ENCODE measurements at regions of chr1 and their contacts with region 1.

Region 1: DNA sequence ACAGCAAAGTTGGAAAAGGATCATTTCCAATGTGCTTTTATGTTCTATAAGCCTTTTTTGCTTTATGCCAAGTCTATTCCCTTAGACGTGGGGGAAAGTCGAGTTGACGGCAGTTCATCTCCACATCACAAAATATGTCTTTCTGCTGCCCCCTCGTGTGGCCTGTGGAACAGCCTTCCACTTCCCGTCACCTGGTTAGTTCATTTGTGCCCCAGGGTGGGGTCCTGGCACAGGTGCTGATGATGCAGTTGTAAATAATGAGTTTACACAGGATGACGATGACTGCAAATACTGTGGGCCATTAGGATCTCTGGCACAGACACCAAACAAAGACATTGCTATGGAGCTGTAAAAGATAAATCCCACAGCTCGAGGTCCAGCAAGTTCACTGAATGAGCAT is 10.0 kb upstream of the OTUD3 start:
- DNase-seq: peak in 2 of 4 experiments; percentile 18 to 33
- ATAC-seq: peak; percentile 39; the same call in 2 of the 3 replicates
- H3K4me3 ChIP-seq: no peak overlapping the region
- H3K27ac ChIP-seq: no peak overlapping the region
- H3K4me1 ChIP-seq: peaks cover 0 to 6% of the 10 kb centered on the region in 2 experiments; a peak in 1 of 5 replicates
- H3K27me3 ChIP-seq: peaks cover 15 to 17% of the 10 kb centered on the region in 2 experiments; a peak in 4 of 5 replicates
- CTCF ChIP-seq: peak; percentile 38 to 56 (median 53); a peak in 5 of 6 replicates
- EP300 ChIP-seq: no peak
- POLR2A ChIP-seq: no peak
- RAD21 ChIP-seq: peak; percentile 23 to 61; a peak in 2 of 4 replicates

Region 2: DNA sequence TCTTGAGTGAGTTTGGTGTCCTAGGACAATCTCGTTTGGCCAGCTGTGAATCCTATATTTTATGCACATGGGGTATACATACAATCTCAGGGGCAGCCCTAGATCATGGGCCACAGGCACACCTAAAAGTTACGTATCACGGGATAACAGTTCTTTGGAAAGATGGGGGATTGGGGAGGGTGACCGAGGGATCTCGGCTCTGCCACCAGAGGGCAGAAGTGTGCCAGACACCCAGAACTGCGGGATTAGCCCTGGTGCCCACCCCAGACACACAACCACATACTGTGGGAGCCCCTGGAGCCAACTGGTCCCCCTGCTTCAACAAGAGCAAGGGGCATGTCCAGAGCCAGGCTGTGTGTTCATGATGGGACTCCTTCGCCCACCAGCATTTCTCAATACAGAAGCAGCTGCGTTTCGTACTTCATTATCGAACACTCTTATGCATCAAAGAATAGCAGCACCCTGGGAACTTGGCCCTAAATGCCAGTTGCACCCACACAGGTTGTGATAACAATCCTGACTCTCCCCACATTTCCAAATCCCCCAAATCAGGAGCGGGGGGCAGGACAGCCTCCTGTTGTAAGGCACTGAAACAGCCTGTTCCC is 109.9 kb before region 1 on chr1:
- CTCF ChIA-PET with region 1: no interaction called
- POLR2A ChIA-PET with region 1: no interaction called
- in situ Hi-C with region 1: no loop called
- intact Hi-C with region 1: loop called (anchors 5 kb)
- DNase-seq: peak; percentile 50 to 87 (median 82)
- ATAC-seq: peak; percentile 92
- H3K4me3 ChIP-seq: no peak overlapping the region
- H3K27ac ChIP-seq: no peak overlapping the region
- H3K4me1 ChIP-seq: no peaks in the 10 kb centered on the region
- H3K27me3 ChIP-seq: peaks cover 37 to 85% of the 10 kb centered on the region in 2 experiments
- CTCF ChIP-seq: peak; percentile 75 to 87 (median 77)
- EP300 ChIP-seq: no peak
- POLR2A ChIP-seq: no peak
- RAD21 ChIP-seq: peak; percentile 41 to 77

Region 3: DNA sequence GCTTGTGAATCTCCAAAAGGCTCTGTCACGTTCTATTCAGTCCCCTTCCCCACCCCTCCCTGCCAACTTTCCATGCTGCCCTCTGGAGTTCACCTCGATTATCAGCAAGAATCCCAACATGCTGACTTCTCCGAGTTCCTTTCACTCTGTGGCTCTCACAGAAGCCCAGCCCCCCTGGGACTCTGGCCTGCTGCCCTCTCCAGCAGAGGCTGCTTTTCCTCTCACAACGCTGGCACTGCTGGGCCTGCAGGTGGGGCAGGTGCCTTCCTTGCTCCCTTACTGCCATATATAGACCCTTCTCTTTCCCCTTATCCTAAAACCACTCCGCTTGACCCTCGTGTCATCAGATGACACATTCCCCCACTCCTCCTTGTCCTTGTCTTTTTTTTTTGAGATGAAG is 46.9 kb before region 1 on chr1:
- CTCF ChIA-PET with region 1: no interaction called
- POLR2A ChIA-PET with region 1: no interaction called
- in situ Hi-C with region 1: no loop called
- intact Hi-C with region 1: no loop called
- DNase-seq: no peak
- ATAC-seq: no peak
- H3K4me3 ChIP-seq: no peak overlapping the region
- H3K27ac ChIP-seq: no peak overlapping the region
- H3K4me1 ChIP-seq: no peaks in the 10 kb centered on the region
- H3K27me3 ChIP-seq: peaks cover 13 to 28% of the 10 kb centered on the region in 2 experiments
- CTCF ChIP-seq: peak in 1 of 3 experiments; percentile 2; a peak in 1 of 6 replicates
- EP300 ChIP-seq: no peak
- POLR2A ChIP-seq: no peak
- RAD21 ChIP-seq: 0 out of 4 replicates have a peak, but pooled peaks of 1 of the 2 experiments have one; percentile 8

Region 4: DNA sequence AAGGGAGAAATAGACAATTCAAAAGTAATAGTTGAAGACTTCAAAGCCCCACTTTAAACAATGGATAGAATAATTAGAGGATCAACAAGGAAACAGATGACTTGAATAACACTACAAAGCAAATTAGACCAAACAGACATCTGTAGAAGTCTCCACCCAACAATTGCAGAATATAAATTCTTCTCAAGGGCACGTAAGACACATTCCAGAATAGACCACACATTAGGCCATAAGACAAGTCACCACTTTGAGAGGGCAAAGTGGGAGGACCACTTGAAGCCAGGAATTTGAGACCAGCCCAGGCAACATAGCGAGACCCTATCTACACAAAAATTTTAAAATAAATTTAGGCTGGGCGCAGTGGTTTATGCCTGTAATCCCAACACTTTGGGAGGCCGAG is 36.6 kb before region 1 on chr1:
- CTCF ChIA-PET with region 1: no interaction called
- POLR2A ChIA-PET with region 1: no interaction called
- in situ Hi-C with region 1: loop called (anchors 5 kb)
- intact Hi-C with region 1: no loop called
- DNase-seq: no peak
- ATAC-seq: no peak
- H3K4me3 ChIP-seq: no peak overlapping the region
- H3K27ac ChIP-seq: no peak overlapping the region
- H3K4me1 ChIP-seq: no peaks in the 10 kb centered on the region; a peak in 1 of 5 replicates
- H3K27me3 ChIP-seq: peaks cover 5 to 13% of the 10 kb centered on the region in 2 experiments; a peak in 4 of 5 replicates
- CTCF ChIP-seq: no peak
- EP300 ChIP-seq: no peak
- POLR2A ChIP-seq: no peak
- RAD21 ChIP-seq: no peak

Region 5: GRCh38 chr1:19882111-19883071 is 10.2 kb after region 1 on chr1 and contains the start of gene OTUD3:
- CTCF ChIA-PET with region 1: no interaction called
- POLR2A ChIA-PET with region 1: interaction called, 12 read pairs
- in situ Hi-C with region 1: no loop called
- intact Hi-C with region 1: no loop called
- DNase-seq: peak; percentile 99
- ATAC-seq: peak; percentile 96
- H3K4me3 ChIP-seq: peak within 1 kb of the TSS; percentile 93
- H3K27ac ChIP-seq: peak within 1 kb of the TSS; percentile 90
- H3K4me1 ChIP-seq: peaks cover 20 to 22% of the 10 kb centered on the region in 2 experiments; a peak in 4 of 5 replicates
- H3K27me3 ChIP-seq: no peaks in the 10 kb centered on the region
- CTCF ChIP-seq: peak; percentile 81 to 98 (median 93)
- EP300 ChIP-seq: 0 out of 2 replicates have a peak, but pooled peaks have one; percentile 41
- POLR2A ChIP-seq: peak; percentile 89
- RAD21 ChIP-seq: peak; percentile 35 to 57
- polyA plus RNA-seq, gene OTUD3: 2.0 to 2.8 TPM

Measured in K562 (cell line).